Right ventricle myocardium superior (tissue), 1 donor: ENCODE measurements at regions of chr9 and their contacts with region 1.

Region 1: DNA sequence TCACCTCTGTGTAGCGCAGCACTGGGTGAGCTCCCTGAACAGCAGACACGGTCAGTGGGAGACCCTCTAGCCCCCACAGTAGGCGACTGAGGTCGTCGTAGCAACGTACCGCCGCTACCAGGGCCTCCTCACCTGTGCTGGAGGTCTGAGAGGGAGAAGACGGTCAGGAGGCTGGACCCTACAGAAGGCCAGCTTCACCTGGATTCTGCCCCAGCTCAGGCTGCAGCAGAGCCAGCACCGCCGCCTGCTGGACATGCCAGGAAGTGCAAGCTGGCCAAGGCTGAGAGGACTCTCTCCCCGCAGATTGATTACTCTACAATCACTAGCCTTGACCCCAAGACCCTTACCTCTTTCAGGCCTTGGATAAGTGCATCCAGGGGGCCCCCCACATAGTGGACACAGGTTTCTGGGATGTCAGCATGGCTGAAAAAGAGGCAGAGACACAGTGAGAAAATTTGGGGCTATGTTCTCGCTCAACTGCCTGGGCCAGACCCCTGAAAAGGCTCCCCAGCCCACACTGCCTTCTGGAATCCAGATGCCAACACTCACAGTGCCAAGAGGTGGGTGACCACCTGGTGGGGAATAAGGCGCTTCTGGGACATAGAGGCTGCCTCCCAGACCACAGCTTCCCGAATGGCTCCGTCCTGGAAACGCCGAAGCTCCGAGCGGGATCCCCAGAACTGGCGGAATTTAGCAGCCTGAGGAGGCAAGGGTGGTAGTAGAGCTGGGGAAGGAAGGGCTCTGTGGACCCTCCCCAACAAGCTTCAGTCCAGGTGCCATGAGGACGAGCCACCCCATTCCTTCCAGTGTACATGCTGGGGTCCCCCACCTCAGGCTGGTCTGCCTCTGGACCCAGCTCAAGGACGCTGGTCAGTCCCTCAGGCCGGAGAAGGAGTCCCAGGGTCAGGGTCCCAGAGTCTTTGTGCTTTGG is 6.9 kb downstream of the NOL6 start:
- DNase-seq: peak; percentile 80
- ATAC-seq: peak; percentile 61

Region 2: DNA sequence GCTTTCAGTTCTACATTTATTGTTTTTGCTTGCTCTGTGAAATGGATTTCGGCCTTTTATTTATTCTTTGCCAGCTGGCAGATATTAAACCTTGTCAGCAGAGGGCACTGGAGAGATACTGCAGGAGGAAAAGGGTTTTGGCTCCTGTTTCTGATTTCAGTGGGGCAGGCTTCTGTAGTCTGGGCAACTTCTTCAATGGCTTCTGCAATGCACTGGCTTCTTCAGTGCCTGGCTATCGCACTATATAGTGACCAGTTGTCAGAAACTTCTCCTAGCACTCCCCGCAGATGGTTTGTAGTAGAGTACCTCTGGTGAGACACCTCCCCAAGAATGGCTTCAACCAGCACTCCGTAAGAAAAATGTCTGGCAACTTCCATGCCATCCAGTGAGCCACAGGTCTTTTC is 179.7 kb before region 1 on chr9:
- intact Hi-C with region 1: loop called (anchors 10 kb)
- DNase-seq: no peak
- ATAC-seq: no peak

Region 3: DNA sequence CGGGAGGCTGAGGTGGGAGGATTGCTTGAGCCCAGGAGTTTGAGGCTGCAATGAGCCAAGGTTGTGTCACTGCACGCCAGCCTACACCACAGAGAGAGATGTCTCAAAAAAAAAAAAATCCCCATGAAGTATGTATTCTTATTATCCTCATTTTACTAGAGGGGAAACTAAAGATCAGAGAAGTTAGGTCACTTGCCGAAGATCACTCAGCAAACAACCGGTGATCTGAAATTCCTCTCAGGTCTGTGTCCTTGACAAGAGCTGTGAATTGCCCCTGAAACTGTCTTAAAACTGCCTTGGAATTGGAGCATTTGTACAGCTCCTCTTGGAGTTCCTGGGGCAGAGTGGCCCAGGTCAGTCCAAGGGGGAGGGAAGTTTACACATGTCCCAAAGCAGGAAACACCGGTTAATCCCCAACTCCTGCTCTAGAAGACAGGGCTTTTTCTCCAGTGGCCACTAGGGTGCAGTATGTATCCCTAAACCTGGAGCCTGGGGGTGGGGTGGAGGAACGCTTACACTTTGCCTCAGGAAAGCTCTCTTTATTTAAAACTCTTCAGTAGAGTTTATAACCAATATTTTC is 92.1 kb before region 1 on chr9:
- intact Hi-C with region 1: loop called (anchors 10 kb)
- DNase-seq: peak; percentile 67
- ATAC-seq: peak; percentile 84